H1 (cell line): ENCODE measurements at regions of chr3 and their contacts with region 1.

Region 1: GRCh38 chr3:18988614-18989229 is 159.6 kb upstream of the KCNH8 start:
- DNase-seq: no peak
- H3K4me3 ChIP-seq: no peak overlapping the region
- H3K27ac ChIP-seq: no peak overlapping the region
- H3K4me1 ChIP-seq: peaks cover 0 to 11% (median 0%) of the 10 kb centered on the region in 4 experiments; a peak in 1 of 7 replicates
- H3K27me3 ChIP-seq: no peaks in the 10 kb centered on the region
- CTCF ChIP-seq: peak in 2 of 3 experiments; percentile 62 to 69; a peak in 2 of 4 replicates
- EP300 ChIP-seq: no peak
- POLR2A ChIP-seq: no peak
- RAD21 ChIP-seq: peak; percentile 94 to 95

Region 2: GRCh38 chr3:18758047-18758704 is 230.5 kb before region 1 on chr3:
- CTCF ChIA-PET with region 1: interaction called, 22 read pairs
- POLR2A ChIA-PET with region 1: no interaction called
- DNase-seq: peak in 1 of 2 experiments; percentile 21
- H3K4me3 ChIP-seq: peak overlapping the region in 1 of 4 experiments; percentile 23; a peak in 1 of 8 replicates
- H3K27ac ChIP-seq: no peak overlapping the region
- H3K4me1 ChIP-seq: no peaks in the 10 kb centered on the region; a peak in 1 of 7 replicates
- H3K27me3 ChIP-seq: no peaks in the 10 kb centered on the region
- CTCF ChIP-seq: peak in 2 of 3 experiments; percentile 75 to 83; a peak in 3 of 4 replicates
- EP300 ChIP-seq: peak in 1 of 2 experiments; percentile 75; a peak in 1 of 3 replicates
- POLR2A ChIP-seq: no peak
- RAD21 ChIP-seq: peak; percentile 87 to 93

Region 3: GRCh38 chr3:18847583-18848197 is 141.0 kb before region 1 on chr3:
- CTCF ChIA-PET with region 1: interaction called, 33 read pairs
- POLR2A ChIA-PET with region 1: no interaction called
- DNase-seq: no peak
- H3K4me3 ChIP-seq: no peak overlapping the region
- H3K27ac ChIP-seq: no peak overlapping the region
- H3K4me1 ChIP-seq: peaks cover 0 to 3% (median 2%) of the 10 kb centered on the region in 4 experiments; a peak in 1 of 7 replicates
- H3K27me3 ChIP-seq: no peaks in the 10 kb centered on the region
- CTCF ChIP-seq: peak in 2 of 3 experiments; percentile 34 to 38; a peak in 2 of 4 replicates
- EP300 ChIP-seq: no peak
- POLR2A ChIP-seq: no peak
- RAD21 ChIP-seq: peak; percentile 24 to 43

Region 4: DNA sequence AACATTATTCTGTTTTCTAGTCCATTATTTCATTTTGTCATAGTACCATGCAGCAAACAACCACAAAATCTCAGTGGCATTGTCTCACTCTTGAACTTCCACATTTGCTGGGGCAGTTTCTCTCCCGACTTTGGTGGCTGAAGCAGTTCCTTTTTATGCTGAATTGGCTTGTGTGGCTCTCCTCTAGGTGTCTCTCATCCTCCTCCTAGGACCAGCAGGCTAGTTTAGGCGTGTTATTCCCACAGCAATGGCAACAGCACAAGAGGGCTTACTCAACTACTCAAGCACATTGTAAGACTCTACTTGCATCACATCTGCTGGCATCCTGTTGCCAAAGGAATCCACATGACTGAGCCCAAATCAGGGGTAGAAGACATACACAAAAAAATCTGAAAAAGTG is 42.2 kb before region 1 on chr3:
- CTCF ChIA-PET with region 1: interaction called, 12 read pairs
- POLR2A ChIA-PET with region 1: no interaction called
- DNase-seq: peak in 1 of 2 experiments; percentile 29
- H3K4me3 ChIP-seq: no peak overlapping the region
- H3K27ac ChIP-seq: no peak overlapping the region
- H3K4me1 ChIP-seq: no peaks in the 10 kb centered on the region
- H3K27me3 ChIP-seq: no peaks in the 10 kb centered on the region
- CTCF ChIP-seq: peak in 2 of 3 experiments; percentile 28 to 37; a peak in 2 of 4 replicates
- EP300 ChIP-seq: no peak
- POLR2A ChIP-seq: no peak
- RAD21 ChIP-seq: peak; percentile 54 to 55